Activated T-helper 1 cell treated with anti-CD3 and anti-CD28 coated beads, Interleukin-12 subunit alpha, Interleukin-12 subunit beta, Interleukin-2, Interleukin-4 antibody, amounts not matched to agents 30 ng/mL and 10 ng/mL and 1 ng/mL, durations not matched to agents 14 hours and 24 hours and 36 hours (primary cell): ENCODE measurements at regions of chr12 and their contacts with region 1.

Region 1: DNA sequence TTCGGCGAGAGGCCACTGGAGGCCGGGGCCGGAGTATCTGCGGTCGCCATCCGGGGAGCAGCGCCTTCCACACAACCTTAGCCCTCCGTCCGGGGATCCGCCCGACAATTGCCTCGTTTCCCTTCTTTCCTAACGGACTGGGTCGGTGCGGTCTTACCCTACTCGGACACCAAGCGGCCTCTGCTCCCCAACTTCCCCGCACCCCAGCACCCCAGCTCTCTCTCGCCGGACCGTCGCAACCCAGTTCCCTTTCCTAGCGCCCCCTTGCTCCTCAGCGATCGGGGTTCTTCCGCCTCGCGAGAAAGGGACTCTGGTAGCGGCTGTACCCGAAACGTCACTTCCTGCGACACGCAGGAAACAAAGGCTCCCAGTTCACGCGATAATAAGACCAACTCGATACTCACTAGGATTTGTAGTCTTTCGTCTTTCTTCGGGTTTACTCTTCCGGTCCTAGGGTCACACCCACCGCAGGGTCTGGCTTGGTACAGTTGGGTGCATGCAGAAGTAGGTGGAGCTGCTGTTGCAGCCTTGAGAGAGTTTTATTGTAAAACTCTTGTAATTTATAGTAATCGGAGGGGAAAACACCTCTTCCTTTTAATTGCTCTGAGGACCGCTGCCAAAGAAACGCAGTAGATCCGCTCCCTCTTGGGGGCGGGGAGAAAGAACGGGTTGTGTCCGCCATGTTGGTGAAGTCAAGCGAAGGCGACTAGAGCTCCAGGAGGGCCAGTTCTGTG is at the start of gene ZFC3H1:
- DNase-seq: peak; percentile 90
- H3K4me3 Mint-ChIP-seq: peak within 1 kb of the TSS; percentile 97
- H3K27ac Mint-ChIP-seq: peak within 1 kb of the TSS; percentile 99
- H3K4me1 Mint-ChIP-seq: peaks cover 44% of the 10 kb centered on the region
- H3K27me3 Mint-ChIP-seq: no peaks in the 10 kb centered on the region
- total RNA-seq, gene ZFC3H1: 57.7 and 58.6 TPM in 2 replicates

Region 2: DNA sequence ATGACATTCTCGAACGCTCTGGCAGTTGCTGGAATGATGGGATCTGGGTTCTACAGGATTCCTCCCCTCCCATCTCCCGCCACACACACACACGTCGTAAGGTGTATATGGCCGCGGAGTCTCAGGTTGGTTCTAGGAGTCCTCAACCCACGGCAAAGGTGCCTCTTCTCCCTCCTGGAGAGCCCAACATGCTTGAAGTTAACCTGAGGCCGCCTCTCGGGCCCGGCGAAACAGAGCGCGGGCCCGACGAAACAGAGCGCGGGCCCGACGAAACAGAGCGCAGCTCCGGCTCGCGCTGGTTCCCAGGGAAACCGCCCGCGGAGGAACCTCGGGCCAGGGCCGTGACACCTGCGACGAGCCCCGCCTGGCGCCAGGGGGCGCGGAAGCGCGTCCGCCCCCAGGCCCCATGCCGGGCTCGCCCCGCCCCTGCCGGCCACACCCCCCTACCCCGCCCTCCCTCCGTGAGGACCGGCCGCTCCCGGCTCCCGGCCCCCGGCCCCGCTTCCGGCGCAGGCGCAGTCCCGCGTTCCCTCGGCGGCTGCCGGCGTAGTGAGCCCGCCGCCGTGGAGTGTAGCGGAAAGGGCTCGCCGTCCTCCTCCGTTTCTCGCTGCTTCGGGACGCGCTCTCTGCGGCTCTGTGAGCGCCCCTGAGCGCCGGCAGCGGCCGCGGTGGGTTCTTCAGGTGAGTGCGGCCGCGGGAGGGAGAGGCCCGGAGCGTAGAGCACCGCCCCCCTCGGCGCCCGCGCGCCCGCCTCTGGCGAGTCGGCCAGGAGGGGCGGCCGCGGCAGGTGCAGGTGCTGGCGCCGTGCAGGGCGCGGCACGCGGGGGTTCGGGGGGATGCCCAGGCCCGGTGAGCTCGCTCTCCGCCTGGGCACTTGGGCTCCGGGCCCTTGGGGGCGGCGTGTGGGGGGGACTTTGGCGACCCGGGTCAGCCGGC is 1925.1 kb before region 1 on chr12 and contains the start of gene RAB3IP:
- intact Hi-C with region 1: loop called (anchors 1 kb)
- DNase-seq: peak; percentile 88
- H3K4me3 Mint-ChIP-seq: peak within 1 kb of the TSS; percentile 95
- H3K27ac Mint-ChIP-seq: peak within 1 kb of the TSS; percentile 92
- H3K4me1 Mint-ChIP-seq: peaks cover 31% of the 10 kb centered on the region
- H3K27me3 Mint-ChIP-seq: peaks cover 36% of the 10 kb centered on the region
- total RNA-seq, gene RAB3IP: 29.8 and 36.1 TPM in 2 replicates

Region 3: GRCh38 chr12:71439362-71440314 is 224.1 kb before region 1 on chr12 and contains the start of gene LGR5:
- intact Hi-C with region 1: no loop called
- DNase-seq: no peak
- H3K4me3 Mint-ChIP-seq: peak within 1 kb of the TSS; percentile 69
- H3K27ac Mint-ChIP-seq: peak within 1 kb of the TSS; percentile 52
- H3K4me1 Mint-ChIP-seq: peaks cover 18% of the 10 kb centered on the region
- H3K27me3 Mint-ChIP-seq: peaks cover 58% of the 10 kb centered on the region
- total RNA-seq, gene LGR5: not detected in 2 replicates

Region 4: DNA sequence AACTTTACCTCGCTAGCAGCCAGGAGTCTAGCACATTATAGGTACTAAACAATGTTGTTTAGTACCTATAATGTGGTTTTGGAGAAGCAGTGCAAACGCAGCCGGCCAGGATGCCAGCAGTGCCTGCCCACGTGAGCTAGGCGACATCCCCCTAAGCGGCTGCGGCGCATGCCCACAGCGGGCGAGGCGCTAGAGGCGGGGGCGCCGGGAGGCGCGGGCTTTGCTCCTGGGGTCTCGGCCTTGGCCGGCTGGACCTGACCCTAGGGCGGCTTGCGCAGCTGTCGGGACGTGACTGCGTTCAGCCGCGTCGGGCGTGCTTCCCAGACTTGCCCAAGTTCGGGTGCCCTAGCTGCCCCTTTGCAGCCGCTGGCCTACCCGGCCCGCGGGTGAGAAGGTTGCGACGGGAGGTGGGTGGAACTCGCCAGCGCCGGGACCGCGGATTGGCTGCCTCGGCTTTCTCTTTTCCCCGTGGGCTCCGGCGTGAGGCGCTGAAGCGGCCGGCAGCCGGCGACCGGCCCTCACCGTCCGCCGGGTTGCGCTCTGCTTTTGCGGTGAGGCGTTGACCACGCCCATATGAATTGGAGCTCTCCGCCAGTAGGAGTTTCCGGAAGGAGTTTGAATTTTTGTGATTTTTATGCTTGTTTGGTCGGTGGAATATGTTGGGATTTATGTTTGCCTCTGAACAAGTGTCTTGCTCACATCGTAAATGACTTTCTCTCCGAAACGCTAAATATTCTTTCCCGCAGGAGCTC is 22.4 kb after region 1 on chr12 and contains the start of gene TMEM19:
- intact Hi-C with region 1: loop called (anchors 1 kb)
- DNase-seq: peak; percentile 78
- H3K4me3 Mint-ChIP-seq: peak within 1 kb of the TSS; percentile 94
- H3K27ac Mint-ChIP-seq: peak within 1 kb of the TSS; percentile 93
- H3K4me1 Mint-ChIP-seq: peaks cover 23% of the 10 kb centered on the region
- H3K27me3 Mint-ChIP-seq: no peaks in the 10 kb centered on the region
- total RNA-seq, gene TMEM19: 10.6 and 11.3 TPM in 2 replicates

Region 5: DNA sequence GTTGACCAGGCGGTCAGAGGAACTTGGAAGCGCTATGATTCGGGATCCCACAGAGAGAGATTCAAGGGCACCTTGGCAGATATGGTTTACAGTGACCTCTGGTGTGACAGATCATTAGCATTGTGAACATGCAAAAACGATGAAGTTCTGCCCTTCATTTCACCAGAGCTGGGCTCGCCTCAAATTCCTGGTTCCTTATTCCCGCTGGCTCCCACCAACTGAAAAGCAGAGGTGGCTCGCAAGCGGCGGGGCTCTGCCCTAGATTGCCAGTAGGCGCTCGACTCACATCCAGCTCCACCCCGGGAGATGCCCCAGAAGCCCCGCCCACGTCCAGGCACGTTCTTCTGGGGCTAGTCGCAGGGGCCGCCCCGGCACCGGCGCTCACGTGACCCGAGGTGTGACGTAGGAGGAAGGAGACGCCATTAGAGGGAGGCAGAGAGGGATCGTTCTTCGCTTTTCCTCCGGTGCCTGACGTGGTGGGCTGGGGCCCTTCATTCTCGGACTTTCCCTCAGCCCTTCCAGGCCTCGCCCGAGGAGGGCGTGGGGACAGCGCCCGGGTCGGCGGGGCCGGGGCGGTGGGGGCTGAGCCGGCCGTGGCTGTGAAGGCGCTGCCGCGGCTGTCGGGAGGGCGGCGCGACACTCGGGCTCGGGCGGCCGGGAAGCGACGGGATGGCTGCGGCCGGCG is 90.9 kb after region 1 on chr12 and contains the start of gene RAB21:
- intact Hi-C with region 1: loop called (anchors 1 kb)
- DNase-seq: peak; percentile 97
- H3K4me3 Mint-ChIP-seq: peak within 1 kb of the TSS; percentile 93
- H3K27ac Mint-ChIP-seq: peak within 1 kb of the TSS; percentile 97
- H3K4me1 Mint-ChIP-seq: peaks cover 22% of the 10 kb centered on the region
- H3K27me3 Mint-ChIP-seq: peaks cover 27% of the 10 kb centered on the region
- total RNA-seq, gene RAB21: 100 and 105 TPM in 2 replicates

Region 6: GRCh38 chr12:71938728-71939385 is 275.1 kb after region 1 on chr12 and contains the start of gene TPH2:
- intact Hi-C with region 1: loop called (anchors 2 kb)
- DNase-seq: peak; percentile 51
- H3K4me3 Mint-ChIP-seq: no peak within 1 kb of the TSS
- H3K27ac Mint-ChIP-seq: peak within 1 kb of the TSS; percentile 1
- H3K4me1 Mint-ChIP-seq: peaks cover 18% of the 10 kb centered on the region
- H3K27me3 Mint-ChIP-seq: peaks cover 28% of the 10 kb centered on the region
- total RNA-seq, gene TPH2: not detected in 2 replicates